ENCODE measurements at regions of chr20 and their contacts with region 1.

Region 1: DNA sequence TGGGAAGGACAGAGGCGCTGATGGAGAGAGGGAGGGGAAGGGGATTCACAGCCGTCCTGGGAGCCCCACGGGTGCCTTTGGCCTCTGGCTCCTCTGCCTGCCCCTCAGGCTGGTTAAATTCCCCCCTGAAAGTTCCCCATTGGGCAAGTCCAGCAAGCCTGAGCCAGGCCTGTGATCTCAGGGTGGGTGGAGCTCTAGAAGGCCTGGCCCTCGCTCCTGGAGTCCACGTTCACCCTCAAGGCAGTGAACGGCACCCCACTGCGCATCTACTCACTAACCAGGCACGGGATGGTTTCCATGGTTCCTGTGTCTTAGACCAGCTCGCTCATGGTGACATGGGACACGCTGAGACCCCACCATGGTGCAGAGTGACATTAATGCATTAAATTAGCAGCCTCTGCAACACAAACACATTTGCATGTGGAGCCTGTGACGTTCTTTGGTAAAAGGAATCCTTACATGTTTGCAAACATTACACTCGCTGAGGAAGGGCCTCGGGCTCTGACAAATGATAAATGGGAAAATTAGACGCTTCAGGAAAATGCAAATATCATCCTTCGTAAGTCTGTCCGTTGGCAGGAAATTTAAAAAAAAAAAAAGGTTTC is 452.7 kb downstream of the PREX1 start:
- DNase-seq: no peak
- ATAC-seq: no peak
- H3K4me3 ChIP-seq: no peak overlapping the region
- H3K4me3 Mint-ChIP-seq: no peak overlapping the region
- H3K27ac ChIP-seq: no peak overlapping the region
- H3K27ac Mint-ChIP-seq: no peak overlapping the region
- H3K4me1 ChIP-seq: no peaks in the 10 kb centered on the region
- H3K4me1 Mint-ChIP-seq: no peaks in the 10 kb centered on the region
- H3K27me3 ChIP-seq: no peaks in the 10 kb centered on the region
- H3K27me3 Mint-ChIP-seq: peaks cover 15% of the 10 kb centered on the region in 2 donors
- CTCF ChIP-seq: no peak

Region 2: DNA sequence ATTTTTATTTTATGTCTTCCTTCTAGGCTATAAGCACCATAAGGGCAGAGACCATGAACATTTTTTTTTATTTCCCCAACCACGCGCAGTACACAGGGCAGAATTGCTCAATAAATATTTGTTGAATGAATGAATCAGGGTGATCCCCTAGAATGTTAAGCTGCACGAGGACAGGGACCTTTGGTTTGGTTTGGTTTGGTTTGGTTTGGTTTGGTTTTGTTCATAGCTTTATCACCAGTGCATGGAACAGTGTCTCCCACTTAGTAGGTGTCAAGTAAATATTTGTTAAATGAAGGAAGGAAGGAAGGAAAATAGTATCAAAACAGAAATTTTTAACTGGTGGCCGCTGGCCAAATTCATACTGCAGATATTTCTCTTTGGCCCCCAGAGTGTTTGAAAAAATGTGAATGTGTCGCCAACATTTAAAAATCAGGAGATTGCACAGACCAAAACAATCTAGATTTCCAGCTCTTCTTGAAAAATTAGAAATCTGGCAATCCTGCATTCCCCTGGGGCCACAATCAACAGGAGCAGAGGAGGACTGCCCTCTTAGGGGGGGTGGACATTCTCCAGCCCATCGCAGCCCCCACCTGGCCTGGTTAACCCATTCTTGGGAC is 1275.2 kb before region 1 on chr20:
- intact Hi-C with region 1: loop called (anchors 10 kb)
- DNase-seq: no peak
- ATAC-seq: no peak
- H3K4me3 ChIP-seq: no peak overlapping the region
- H3K4me3 Mint-ChIP-seq: no peak overlapping the region
- H3K27ac ChIP-seq: no peak overlapping the region
- H3K27ac Mint-ChIP-seq: no peak overlapping the region
- H3K4me1 ChIP-seq: no peaks in the 10 kb centered on the region
- H3K4me1 Mint-ChIP-seq: no peaks in the 10 kb centered on the region
- H3K27me3 ChIP-seq: no peaks in the 10 kb centered on the region
- H3K27me3 Mint-ChIP-seq: peaks cover 19 to 58% of the 10 kb centered on the region in 2 donors
- CTCF ChIP-seq: no peak